Lower leg skin (tissue), 4 donors: ENCODE measurements at regions of chr17 and their contacts with region 1.

Region 1: GRCh38 chr17:37592291-37592690 is 16.9 kb downstream of the SYNRG start:
- DNase-seq: no peak
- H3K4me3 ChIP-seq: no peak overlapping the region
- CTCF ChIP-seq: no peak
- POLR2A ChIP-seq: no peak

Region 2: DNA sequence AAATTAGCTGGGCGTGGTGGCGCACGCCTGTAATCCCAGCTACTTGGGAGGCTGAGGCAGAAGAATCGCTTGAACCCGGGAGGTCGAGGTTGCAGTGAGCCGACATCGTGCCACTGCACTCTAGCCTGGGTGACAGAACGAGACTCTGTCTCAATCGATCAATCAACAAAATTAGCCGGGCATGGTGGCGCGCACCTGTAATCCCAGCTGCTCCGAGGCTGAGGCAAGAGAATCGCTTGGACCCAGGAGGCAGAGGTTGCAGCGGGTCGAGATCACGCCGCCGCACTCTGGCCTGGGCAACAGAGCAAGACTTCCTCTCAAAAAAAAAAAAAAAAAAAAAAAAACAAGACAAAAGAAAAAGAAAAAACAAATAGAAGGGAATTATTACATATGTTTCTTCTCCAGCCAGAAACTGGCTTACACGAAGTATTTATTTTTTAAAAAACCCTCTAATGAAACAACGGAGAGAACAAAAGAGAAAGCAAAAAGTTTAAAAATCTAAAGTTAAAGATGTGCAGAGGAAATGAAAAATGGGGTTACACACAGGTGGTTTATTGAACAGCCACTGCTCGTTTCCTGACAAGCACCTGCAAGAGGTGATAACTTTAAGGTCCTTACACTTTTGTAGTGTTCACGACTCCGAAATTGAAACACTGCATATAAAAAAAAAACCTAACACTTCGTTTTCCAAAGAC is 15.5 kb after region 1 on chr17:
- intact Hi-C with region 1: loop called (anchors 1 kb)
- DNase-seq: no peak
- H3K4me3 ChIP-seq: no peak overlapping the region
- CTCF ChIP-seq: no peak
- POLR2A ChIP-seq: no peak